Common myeloid progenitor, CD34-positive (primary cell): ENCODE measurements at regions of chr2 and their contacts with region 1.

Region 1: GRCh38 chr2:112749755-112750559 is 14.5 kb downstream of the CKAP2L start:
- DNase-seq: peak; percentile 88 to 95 (median 94)
- H3K4me3 ChIP-seq: peak overlapping the region in 3 of 7 experiments; percentile 19 to 31 (median 25)
- H3K27ac ChIP-seq: peak overlapping the region; percentile 48 to 78
- H3K4me1 ChIP-seq: peaks cover 5 to 30% (median 13%) of the 10 kb centered on the region in 4 experiments
- H3K27me3 ChIP-seq: no peaks in the 10 kb centered on the region

Region 2: DNA sequence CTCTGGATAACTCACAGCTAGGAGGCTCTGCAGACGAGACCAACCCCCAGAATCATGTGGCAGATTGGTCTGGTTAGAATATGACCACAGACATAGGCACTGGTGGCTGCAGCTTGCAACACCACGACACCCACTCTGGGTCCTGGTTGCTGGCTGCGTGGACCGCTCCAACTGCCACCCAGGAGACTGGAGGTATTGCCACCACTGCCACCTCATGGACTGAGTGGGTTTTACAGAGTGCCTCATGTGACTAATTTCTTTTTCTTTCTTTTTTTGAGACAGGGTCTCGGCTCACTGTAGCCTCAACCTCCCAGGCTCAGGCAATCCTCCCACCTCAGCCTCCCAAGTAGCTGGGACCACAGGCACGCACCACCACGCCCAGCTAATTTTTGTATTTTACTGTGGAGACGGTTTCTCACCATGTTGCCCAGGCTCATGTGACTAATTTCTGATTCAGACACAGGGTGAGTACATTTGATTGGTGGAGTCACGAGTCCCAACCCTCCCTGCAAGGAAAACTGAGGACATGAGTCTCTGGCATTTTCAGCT is 59.0 kb before region 1 on chr2:
- CTCF ChIA-PET with region 1: no interaction called
- POLR2A ChIA-PET with region 1: no interaction called
- DNase-seq: peak; percentile 76 to 92 (median 89)
- H3K4me3 ChIP-seq: peak overlapping the region in 2 of 7 experiments; percentile 31 to 62
- H3K27ac ChIP-seq: no peak overlapping the region
- H3K4me1 ChIP-seq: peaks cover 3 to 45% (median 29%) of the 10 kb centered on the region in 4 experiments
- H3K27me3 ChIP-seq: no peaks in the 10 kb centered on the region

Region 3: GRCh38 chr2:112714836-112715631 is 34.9 kb before region 1 on chr2:
- CTCF ChIA-PET with region 1: no interaction called
- POLR2A ChIA-PET with region 1: no interaction called
- DNase-seq: no peak
- H3K4me3 ChIP-seq: no peak overlapping the region
- H3K27ac ChIP-seq: no peak overlapping the region
- H3K4me1 ChIP-seq: peaks cover 2 to 22% (median 14%) of the 10 kb centered on the region in 4 experiments
- H3K27me3 ChIP-seq: no peaks in the 10 kb centered on the region

Region 4: GRCh38 chr2:112737542-112738232 is 12.3 kb before region 1 on chr2:
- CTCF ChIA-PET with region 1: interaction called, 39 read pairs
- POLR2A ChIA-PET with region 1: no interaction called
- DNase-seq: no peak
- H3K4me3 ChIP-seq: no peak overlapping the region
- H3K27ac ChIP-seq: no peak overlapping the region
- H3K4me1 ChIP-seq: peaks cover 0 to 4% (median 0%) of the 10 kb centered on the region in 4 experiments
- H3K27me3 ChIP-seq: no peaks in the 10 kb centered on the region

Region 5: DNA sequence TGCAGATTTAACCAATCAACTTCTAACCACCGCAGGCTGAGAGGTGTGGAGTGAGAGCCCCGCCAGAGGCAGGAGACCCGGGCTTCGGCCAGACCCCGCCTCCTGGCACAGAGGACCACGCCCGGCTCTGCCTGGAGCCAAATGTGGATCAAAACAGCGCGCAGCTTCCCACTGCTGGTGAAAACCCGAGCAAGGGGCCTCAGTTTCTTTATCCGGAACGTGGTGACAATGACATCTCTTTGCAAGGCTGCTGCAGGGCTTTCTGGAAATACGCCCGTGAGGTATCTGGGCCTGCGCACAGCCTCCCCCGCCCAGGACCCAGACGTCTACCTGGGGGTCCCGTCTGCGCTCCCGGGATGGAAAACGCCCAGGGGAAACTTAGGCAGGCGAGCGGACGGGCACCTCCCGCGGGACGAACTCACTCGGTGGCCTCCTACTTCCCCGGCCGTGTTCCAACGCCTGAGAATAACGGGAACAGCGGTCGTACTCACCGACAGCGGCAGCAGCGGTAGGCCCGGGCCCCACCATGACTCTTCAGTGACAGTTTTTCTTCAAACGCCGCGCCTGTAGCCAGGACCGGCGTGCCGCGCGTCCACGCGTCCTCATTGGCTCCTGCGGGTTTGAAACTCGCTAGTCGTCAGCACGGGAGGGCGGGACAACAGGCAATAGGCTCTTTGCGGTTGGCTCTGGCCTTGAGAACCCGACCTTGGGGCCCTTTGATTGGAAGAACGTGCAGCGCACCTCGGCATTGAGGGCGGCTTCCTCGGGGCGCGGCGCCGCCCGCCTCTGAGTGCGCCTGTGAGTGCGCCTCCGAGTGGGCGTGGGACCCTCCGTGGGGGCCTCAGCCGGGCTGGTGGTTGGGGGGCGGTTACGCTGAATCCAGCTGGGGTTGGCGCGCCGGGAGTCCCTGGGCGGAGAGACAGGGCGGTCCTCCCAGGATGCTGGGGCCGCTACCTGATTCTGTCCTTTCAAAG is 14.4 kb after region 1 on chr2 and contains the start of gene CKAP2L:
- CTCF ChIA-PET with region 1: interaction called, 32 read pairs
- POLR2A ChIA-PET with region 1: no interaction called
- DNase-seq: peak; percentile 98 to 99 (median 99)
- H3K4me3 ChIP-seq: peak within 1 kb of the TSS; percentile 62 to 96 (median 87)
- H3K27ac ChIP-seq: peak within 1 kb of the TSS; percentile 56 to 69
- H3K4me1 ChIP-seq: peaks cover 6 to 36% (median 26%) of the 10 kb centered on the region in 4 experiments
- H3K27me3 ChIP-seq: no peaks in the 10 kb centered on the region

Region 6: GRCh38 chr2:112836695-112837117 is 86.7 kb after region 1 on chr2 and contains the start of gene IL1B:
- CTCF ChIA-PET with region 1: interaction called, 20 read pairs
- POLR2A ChIA-PET with region 1: interaction called, 7 read pairs
- DNase-seq: peak; percentile 81 to 91 (median 91)
- H3K4me3 ChIP-seq: peak within 1 kb of the TSS; percentile 67 to 94 (median 85)
- H3K27ac ChIP-seq: peak within 1 kb of the TSS; percentile 75 to 88
- H3K4me1 ChIP-seq: peaks cover 67 to 93% (median 80%) of the 10 kb centered on the region in 4 experiments
- H3K27me3 ChIP-seq: no peaks in the 10 kb centered on the region

Region 7: GRCh38 chr2:112884869-112885505 is 135.0 kb after region 1 on chr2:
- CTCF ChIA-PET with region 1: interaction called, 36 read pairs
- POLR2A ChIA-PET with region 1: no interaction called
- DNase-seq: peak; percentile 44 to 74 (median 70)
- H3K4me3 ChIP-seq: peak overlapping the region in 2 of 7 experiments; percentile 9 to 26
- H3K27ac ChIP-seq: no peak overlapping the region
- H3K4me1 ChIP-seq: peaks cover 11 to 58% (median 40%) of the 10 kb centered on the region in 4 experiments
- H3K27me3 ChIP-seq: no peaks in the 10 kb centered on the region

Region 8: DNA sequence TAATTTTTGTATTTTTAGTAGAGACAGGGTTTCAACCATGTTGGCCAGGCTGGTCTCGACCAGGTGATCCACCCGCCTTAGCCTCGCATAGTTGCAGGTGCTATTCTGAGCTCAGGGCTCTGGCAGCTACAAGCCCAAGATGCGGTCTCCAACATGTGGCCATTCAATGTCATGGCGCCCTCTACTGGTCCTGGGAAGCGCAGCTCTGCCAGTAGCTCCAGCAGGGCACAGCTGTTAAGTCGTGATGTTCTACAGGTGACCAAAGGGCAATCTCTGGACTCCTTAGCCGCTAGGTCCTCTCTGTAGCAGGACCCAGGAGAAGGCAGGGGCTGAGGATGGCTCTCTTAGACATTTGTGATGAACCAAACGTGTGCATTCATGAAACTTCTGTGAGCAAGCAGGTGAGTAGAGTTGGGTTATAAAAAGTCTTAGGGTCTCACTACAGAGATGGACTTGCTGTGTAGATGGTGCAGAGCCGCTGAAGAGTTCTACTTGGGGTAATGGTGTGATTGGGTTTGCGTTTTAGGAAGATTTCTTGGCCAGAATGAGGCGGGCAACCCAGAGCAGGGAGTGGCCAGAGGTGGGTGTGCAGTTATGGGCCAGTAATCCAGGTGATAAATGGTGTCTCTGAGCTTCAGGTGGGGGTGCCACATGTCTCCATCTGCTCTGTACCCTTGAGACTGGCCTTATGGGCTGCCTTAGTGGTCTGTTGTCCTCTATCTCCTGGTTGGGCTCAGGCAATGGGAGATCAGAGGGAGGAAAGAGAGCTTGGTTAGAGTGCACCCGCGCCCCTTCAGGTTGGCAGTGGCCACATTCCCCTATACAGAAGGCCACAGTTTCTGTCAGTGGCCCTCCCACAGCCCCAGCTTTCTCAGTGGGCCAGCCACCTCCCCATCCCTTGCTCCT is 192.0 kb after region 1 on chr2:
- CTCF ChIA-PET with region 1: interaction called, 97 read pairs
- POLR2A ChIA-PET with region 1: interaction called, 3 read pairs
- DNase-seq: peak; percentile 78 to 87 (median 85)
- H3K4me3 ChIP-seq: no peak overlapping the region
- H3K27ac ChIP-seq: no peak overlapping the region
- H3K4me1 ChIP-seq: peaks cover 0 to 13% (median 10%) of the 10 kb centered on the region in 4 experiments
- H3K27me3 ChIP-seq: no peaks in the 10 kb centered on the region

Region 9: GRCh38 chr2:112947374-112947773 is 197.4 kb after region 1 on chr2:
- CTCF ChIA-PET with region 1: interaction called, 97 read pairs
- POLR2A ChIA-PET with region 1: no interaction called
- DNase-seq: no peak
- H3K4me3 ChIP-seq: no peak overlapping the region
- H3K27ac ChIP-seq: no peak overlapping the region
- H3K4me1 ChIP-seq: peaks cover 0 to 3% (median 0%) of the 10 kb centered on the region in 4 experiments
- H3K27me3 ChIP-seq: no peaks in the 10 kb centered on the region

Region 10: DNA sequence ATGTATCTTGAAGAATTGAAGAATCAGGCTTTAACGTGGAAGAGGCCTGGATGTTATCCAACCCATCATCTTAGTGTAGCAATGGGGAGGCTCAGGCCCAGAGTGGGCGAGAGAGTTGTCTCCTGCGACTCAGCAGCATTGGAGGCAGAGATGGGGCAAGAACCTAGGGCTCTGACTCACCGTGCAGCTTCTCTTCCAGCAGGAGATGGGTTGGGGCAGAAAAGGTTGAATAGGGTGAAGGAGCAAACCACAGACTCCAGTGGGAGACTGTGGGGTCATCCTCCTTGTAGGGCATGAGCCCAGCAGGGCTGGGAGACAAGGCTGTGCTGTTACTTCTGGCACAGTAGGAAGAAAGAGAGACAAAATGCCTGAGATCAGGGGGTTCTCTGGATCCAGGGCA is 310.4 kb after region 1 on chr2:
- CTCF ChIA-PET with region 1: no interaction called
- POLR2A ChIA-PET with region 1: no interaction called
- DNase-seq: no peak
- H3K4me3 ChIP-seq: no peak overlapping the region
- H3K27ac ChIP-seq: no peak overlapping the region
- H3K4me1 ChIP-seq: no peaks in the 10 kb centered on the region
- H3K27me3 ChIP-seq: no peaks in the 10 kb centered on the region